Activated B cell treated with CpG ODN at 0.5 μM for 24 hours (primary cell): ENCODE measurements at regions of chr20 and their contacts with region 1.

Region 1: GRCh38 chr20:47418061-47418912 is 61.8 kb upstream of the ZMYND8 start:
- DNase-seq: no peak
- ATAC-seq: no peak
- H3K4me3 Mint-ChIP-seq: no peak overlapping the region
- H3K27ac Mint-ChIP-seq: peak overlapping the region; percentile 100
- H3K4me1 Mint-ChIP-seq: peaks cover 73% of the 10 kb centered on the region
- H3K27me3 Mint-ChIP-seq: no peaks in the 10 kb centered on the region
- CTCF ChIP-seq: no peak

Region 2: GRCh38 chr20:45621593-45621992 is 1796.7 kb before region 1 on chr20:
- CTCF ChIA-PET with region 1: no interaction called
- POLR2A ChIA-PET with region 1: no interaction called
- intact Hi-C with region 1: no loop called
- DNase-seq: no peak
- ATAC-seq: no peak
- H3K4me3 Mint-ChIP-seq: no peak overlapping the region
- H3K27ac Mint-ChIP-seq: no peak overlapping the region
- H3K4me1 Mint-ChIP-seq: no peaks in the 10 kb centered on the region
- H3K27me3 Mint-ChIP-seq: peaks cover 10% of the 10 kb centered on the region
- CTCF ChIP-seq: no peak

Region 3: DNA sequence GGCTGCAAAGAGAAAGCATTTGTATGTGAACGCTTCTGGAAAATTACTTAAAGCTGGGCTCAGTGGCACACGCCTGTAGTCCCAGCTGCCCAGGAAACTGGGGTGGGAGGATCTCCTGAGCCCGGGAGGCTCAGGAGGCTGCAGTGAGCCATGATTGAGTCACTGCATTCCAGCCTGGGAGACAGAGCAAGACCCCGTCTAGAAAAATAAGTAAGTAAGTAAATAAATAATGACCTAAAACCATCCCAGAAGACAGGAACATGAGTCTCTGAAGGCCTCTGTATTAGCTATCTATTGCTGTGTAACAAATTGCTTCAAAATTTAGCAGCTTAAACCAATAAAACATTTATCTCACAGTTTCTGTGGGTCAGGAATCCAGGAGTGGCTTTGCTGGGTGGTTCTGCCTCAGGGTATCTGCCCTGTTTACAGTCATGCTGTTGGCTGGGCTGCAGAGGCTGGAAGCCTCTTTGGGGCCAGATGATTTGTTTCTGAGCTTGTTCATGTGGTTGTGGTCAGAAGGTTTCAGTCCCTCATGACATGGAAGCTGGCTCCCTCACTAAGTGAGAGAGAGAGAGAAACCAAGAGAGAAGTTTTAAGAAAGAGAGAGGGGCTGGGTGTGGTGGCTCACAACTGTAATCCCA is 35.0 kb after region 1 on chr20:
- CTCF ChIA-PET with region 1: interaction called, 5 read pairs
- POLR2A ChIA-PET with region 1: interaction called, 18 read pairs
- intact Hi-C with region 1: loop called (anchors 5 kb)
- DNase-seq: no peak
- ATAC-seq: peak; percentile 78
- H3K4me3 Mint-ChIP-seq: peak overlapping the region; percentile 49
- H3K27ac Mint-ChIP-seq: peak overlapping the region; percentile 80
- H3K4me1 Mint-ChIP-seq: peaks cover 55% of the 10 kb centered on the region
- H3K27me3 Mint-ChIP-seq: no peaks in the 10 kb centered on the region
- CTCF ChIP-seq: no peak

Region 4: GRCh38 chr20:47704755-47705493 is 286.6 kb after region 1 on chr20:
- CTCF ChIA-PET with region 1: no interaction called
- POLR2A ChIA-PET with region 1: no interaction called
- intact Hi-C with region 1: no loop called
- DNase-seq: no peak
- ATAC-seq: no peak
- H3K4me3 Mint-ChIP-seq: no peak overlapping the region
- H3K27ac Mint-ChIP-seq: no peak overlapping the region
- H3K4me1 Mint-ChIP-seq: peaks cover 14% of the 10 kb centered on the region
- H3K27me3 Mint-ChIP-seq: peaks cover 4% of the 10 kb centered on the region
- CTCF ChIP-seq: no peak